Colonic mucosa (tissue), 4 donors: ENCODE measurements at regions of chr4 and their contacts with region 1.

Region 1: GRCh38 chr4:112225157-112225556 is 6.4 kb upstream of the AP1AR start:
- DNase-seq: no peak
- H3K4me3 ChIP-seq: no peak overlapping the region
- H3K27ac ChIP-seq: no peak overlapping the region
- H3K4me1 ChIP-seq: no peaks in the 10 kb centered on the region
- H3K27me3 ChIP-seq: no peaks in the 10 kb centered on the region
- CTCF ChIP-seq: no peak

Region 2: GRCh38 chr4:112284662-112285411 is 59.7 kb after region 1 on chr4:
- intact Hi-C with region 1: loop called (anchors 5 kb)
- DNase-seq: peak; percentile 35
- H3K4me3 ChIP-seq: peak overlapping the region; percentile 61
- H3K27ac ChIP-seq: peak overlapping the region; percentile 78
- H3K4me1 ChIP-seq: no peaks in the 10 kb centered on the region
- H3K27me3 ChIP-seq: no peaks in the 10 kb centered on the region
- CTCF ChIP-seq: no peak